ENCODE measurements at regions of chr22 and their contacts with region 1.

Region 1: DNA sequence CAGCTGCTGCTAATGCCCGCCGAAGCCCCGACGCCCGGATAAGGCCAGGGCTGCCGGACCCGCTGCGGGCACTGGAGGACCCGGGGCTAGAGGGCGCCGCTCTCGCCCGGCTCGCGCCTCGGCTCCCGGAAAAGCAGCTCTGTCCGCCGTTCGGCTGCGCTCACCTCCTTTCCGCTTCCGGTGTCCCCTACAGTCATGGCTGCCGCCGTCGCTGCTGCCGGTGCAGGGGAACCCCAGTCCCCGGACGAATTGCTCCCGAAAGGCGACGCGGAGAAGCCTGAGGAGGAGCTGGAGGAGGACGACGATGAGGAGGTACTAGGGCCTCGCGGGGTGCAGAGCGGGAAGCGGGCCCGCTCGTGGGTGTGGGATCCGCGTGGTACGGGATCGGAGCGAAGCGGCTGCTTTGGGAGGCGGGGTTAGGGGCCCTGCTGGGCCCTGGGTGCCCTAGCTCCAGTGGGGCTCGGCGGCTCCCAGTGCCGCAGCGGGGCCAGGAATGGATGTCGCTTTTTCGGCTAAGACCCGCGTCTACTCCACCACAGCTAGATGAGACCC is at the start of gene TOMM22:
- DNase-seq: peak; percentile 90
- H3K4me3 ChIP-seq: peak within 1 kb of the TSS; percentile 89
- H3K27ac ChIP-seq: peak within 1 kb of the TSS; percentile 25
- H3K4me1 ChIP-seq: peaks cover 11% of the 10 kb centered on the region
- CTCF ChIP-seq: peak; percentile 90
- total RNA-seq, gene TOMM22: 51.8 and 61.7 TPM in 2 replicates

Region 2: DNA sequence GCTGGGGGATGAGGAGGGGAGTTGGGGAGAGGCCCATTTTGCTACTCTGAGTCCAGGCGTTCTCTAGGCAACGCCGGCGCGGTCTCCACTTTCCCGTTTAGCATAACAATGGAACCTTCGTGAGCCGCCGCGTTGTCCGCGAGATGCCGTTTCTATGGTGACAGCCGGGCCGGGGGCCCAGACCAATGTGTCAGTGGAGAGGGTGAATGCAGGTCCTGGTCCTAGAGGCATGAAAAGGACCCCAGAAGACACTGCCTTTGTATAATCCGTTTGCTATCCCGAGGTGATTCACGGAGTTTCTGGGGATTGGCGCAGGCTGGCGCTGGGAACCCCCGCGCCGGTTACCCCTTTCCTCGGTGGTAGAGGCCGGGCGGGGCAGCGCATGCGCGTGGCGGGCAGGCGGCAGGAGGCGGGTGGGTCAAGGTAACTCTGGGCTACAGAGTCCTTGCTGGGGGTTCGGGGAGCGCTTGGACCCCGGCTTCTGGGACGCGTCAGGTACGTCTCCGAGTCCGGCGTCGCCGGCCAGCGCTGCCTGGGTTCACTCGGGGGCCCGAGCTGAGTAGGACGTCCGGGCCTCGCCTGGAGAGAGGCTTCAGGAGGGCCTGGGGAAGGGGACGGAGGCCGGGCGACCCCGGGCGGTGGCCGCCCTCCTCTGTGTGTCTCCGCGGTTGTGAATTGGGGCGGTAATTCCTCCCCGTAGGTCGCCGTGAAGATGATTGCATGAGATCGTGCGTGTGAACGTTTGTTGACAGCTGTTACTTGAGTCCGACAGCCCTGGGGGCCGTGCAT is 25.4 kb before region 1 on chr22 and contains the starts of genes CBY1 and FAM227A:
- CTCF ChIA-PET with region 1: no interaction called
- POLR2A ChIA-PET with region 1: interaction called, 3 read pairs
- intact Hi-C with region 1: loop called (anchors 2 kb)
- DNase-seq: peak; percentile 91
- H3K4me3 ChIP-seq: peak within 1 kb of the TSS; percentile 81
- H3K27ac ChIP-seq: peak within 1 kb of the TSS; percentile 47
- H3K4me1 ChIP-seq: peaks cover 12% of the 10 kb centered on the region
- CTCF ChIP-seq: no peak
- total RNA-seq, gene CBY1: 3.5 and 10.5 TPM in 2 replicates
- total RNA-seq, gene FAM227A: 0.16 and 0.23 TPM in 2 replicates

Region 3: DNA sequence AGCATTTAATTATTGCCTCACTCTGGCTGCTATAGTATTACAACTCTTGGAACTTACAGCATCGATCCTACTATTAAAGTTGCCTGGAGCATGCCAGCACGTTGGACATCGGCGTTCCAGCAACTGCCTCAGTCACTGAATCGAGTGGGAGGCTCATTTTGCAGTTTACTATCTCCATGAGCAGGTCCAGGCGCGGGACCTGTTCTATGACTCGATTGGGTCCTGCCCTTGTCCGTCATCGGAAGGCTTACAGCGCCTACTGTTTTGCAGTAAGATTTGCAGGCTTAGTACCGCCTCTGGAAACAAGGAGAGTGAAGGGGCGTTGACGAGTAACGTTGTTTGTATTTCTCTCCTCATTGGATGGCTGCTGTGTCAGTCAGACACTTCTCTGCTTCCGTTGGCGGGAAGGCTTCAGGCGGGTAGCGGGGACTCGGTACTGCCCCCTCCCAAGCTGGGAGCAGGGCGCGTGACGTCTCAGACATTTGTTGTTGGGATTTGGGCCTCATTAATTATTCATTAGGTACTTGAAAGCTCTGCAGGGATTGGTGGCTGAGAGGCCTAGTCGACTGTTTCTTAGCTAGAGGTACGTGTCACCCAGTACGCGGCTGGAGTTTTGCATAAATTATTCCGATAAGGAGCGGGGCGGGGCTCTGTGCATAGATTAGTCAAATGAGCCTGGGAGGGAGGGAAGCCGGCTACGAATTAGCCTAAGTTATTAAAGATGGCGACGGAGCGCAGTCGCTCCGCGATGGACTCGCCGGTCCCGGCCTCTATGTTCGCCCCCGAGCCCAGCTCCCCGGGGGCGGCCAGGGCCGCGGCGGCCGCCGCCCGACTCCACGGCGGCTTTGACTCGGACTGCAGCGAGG is 23.6 kb after region 1 on chr22 and contains the start of gene GTPBP1:
- CTCF ChIA-PET with region 1: no interaction called
- POLR2A ChIA-PET with region 1: interaction called, 18 read pairs
- intact Hi-C with region 1: loop called (anchors 2 kb)
- DNase-seq: peak; percentile 100
- H3K4me3 ChIP-seq: peak within 1 kb of the TSS; percentile 97
- H3K27ac ChIP-seq: peak within 1 kb of the TSS; percentile 79
- H3K4me1 ChIP-seq: peaks cover 69% of the 10 kb centered on the region
- CTCF ChIP-seq: no peak
- total RNA-seq, gene GTPBP1: 46.1 and 51.1 TPM in 2 replicates

Region 4: GRCh38 chr22:38766076-38766777 is 84.4 kb after region 1 on chr22:
- CTCF ChIA-PET with region 1: no interaction called
- POLR2A ChIA-PET with region 1: no interaction called
- intact Hi-C with region 1: no loop called
- DNase-seq: peak; percentile 26
- H3K4me3 ChIP-seq: no peak overlapping the region
- H3K27ac ChIP-seq: no peak overlapping the region
- H3K4me1 ChIP-seq: no peaks in the 10 kb centered on the region
- CTCF ChIP-seq: peak; percentile 82